Testis (tissue), 5 donors: ENCODE measurements at regions of chr19 and their contacts with region 1.

Region 1: DNA sequence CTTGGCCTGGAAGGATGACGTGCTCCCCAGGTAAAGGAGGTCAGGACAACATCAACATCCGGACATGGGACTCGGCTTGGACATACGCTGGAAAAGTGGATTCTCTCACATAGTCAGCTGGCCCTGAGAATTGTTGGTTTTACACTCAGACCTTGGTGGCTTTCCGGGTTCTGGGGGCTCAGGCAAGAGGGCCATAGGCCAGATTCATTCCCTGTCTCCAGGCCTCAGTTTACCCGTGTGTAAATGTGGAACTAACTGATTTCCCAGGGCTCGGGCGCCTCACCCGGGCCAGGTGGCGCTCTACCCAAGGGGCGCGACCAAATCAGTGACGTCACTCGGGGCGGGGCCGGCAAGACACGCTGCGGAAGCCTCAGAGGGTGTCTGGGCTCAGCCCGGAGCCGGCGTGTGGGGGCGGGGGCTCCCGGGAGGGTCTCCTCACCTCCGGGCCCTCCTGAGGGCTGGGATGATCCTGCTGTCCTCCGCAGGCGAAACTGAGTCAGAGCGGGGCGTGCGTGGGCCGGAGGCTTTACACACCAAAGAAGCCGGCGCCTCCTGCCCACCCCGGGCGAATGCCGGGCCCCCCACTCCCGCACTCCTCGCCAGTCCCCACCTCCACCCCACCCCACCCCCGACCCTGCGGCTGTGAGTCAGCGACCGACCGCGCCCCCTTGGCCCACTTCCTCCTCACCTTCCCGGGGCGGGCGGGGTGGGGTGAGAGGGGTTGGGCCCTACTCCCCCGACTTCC is 861 bp upstream of the VASP start:
- DNase-seq: peak; percentile 96
- H3K4me3 ChIP-seq: peak overlapping the region; percentile 86 to 97
- H3K27ac ChIP-seq: peak overlapping the region; percentile 79 to 93
- H3K4me1 ChIP-seq: peaks cover 19% of the 10 kb centered on the region
- H3K27me3 ChIP-seq: no peaks in the 10 kb centered on the region
- CTCF ChIP-seq: peak in 1 of 3 experiments; percentile 39
- POLR2A ChIP-seq: peak; percentile 53

Region 2: DNA sequence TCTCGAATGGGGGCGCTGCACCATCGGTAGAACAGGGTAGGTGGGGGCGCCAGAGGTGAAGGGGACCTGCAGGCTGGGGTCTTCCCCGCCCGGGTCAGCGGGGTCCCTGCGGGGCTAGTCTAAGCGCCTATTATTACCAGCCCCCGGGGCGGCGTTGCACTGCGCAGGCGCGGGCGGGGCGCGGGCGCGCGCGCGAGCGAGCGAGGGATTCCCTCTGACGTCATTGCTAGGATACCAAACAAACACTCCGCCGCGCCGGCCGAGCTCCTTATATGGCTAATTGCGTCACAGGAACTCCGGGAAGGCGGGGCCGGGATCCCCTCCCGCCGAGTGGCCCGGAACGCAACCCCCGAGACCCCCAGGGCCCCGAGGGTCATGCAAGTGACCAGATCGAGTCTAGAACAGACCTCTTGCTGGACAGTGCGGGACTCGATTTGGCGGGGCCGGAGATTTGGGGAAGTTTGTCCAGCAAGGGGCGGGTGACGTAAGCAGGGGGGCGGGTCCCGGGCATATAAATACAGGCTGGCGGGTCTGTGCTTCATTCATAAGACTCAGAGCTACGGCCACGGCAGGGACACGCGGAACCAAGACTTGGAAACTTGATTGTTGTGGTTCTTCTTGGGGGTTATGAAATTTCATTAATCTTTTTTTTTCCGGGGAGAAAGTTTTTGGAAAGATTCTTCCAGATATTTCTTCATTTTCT is 38.8 kb before region 1 on chr19 and contains the start of gene FOSB:
- intact Hi-C with region 1: no loop called
- DNase-seq: peak; percentile 98
- H3K4me3 ChIP-seq: peak within 1 kb of the TSS; percentile 70 to 86
- H3K27ac ChIP-seq: peak within 1 kb of the TSS; percentile 91 to 93
- H3K4me1 ChIP-seq: peaks cover 20% of the 10 kb centered on the region
- H3K27me3 ChIP-seq: no peaks in the 10 kb centered on the region
- CTCF ChIP-seq: no peak
- POLR2A ChIP-seq: peak; percentile 94
- total RNA-seq, gene FOSB: 1.2 to 3.9 TPM

Region 3: DNA sequence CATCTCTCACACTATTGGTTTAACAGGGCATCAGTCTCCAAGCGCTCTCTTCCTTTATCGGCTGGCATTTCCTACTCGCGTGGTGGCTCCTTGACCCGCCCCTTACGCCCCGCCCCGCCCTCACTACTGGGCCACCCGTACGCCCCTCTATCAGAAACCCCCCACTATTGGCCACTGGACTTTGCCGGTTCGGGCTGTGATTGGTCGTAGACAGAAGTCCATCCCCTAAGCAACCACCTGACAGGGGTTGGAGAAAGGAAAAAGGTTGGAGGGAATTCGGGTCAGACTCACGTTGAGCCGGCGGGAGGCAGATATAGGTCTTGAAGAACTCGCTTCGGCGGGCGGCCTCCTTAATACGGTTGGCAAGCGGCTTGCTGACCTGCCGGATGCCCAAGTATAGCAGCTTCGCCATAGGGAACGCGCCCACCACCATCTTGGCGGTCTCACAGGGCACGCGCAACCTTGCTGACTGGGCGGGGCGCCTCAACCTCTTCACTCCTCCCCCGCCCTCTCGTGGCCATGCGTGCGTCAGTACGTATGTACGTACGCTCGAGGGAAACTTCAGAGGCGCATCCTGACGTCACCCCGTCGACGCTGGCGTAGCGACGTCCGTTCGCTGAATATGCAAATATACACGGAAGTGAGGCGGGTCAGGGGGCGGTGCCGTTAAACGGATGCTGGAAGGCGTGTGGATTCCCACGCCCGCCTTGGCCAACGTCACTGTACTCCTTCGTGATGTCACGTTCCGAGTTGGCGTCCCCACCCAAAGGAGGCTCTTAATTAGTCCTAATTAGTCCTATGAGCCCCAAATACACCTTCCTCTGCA is 78.1 kb after region 1 on chr19 and contains the start of gene OPA3:
- intact Hi-C with region 1: loop called (anchors 5 kb)
- DNase-seq: peak; percentile 100
- H3K4me3 ChIP-seq: peak within 1 kb of the TSS; percentile 77 to 78
- H3K27ac ChIP-seq: peak within 1 kb of the TSS; percentile 97 to 98
- H3K4me1 ChIP-seq: peaks cover 7% of the 10 kb centered on the region
- H3K27me3 ChIP-seq: no peaks in the 10 kb centered on the region
- CTCF ChIP-seq: peak in 1 of 3 experiments; percentile 42
- POLR2A ChIP-seq: peak; percentile 59
- total RNA-seq, gene OPA3: 18.3 to 19.3 TPM